ENCODE measurements at regions of chr19 and their contacts with region 1.

Region 1: DNA sequence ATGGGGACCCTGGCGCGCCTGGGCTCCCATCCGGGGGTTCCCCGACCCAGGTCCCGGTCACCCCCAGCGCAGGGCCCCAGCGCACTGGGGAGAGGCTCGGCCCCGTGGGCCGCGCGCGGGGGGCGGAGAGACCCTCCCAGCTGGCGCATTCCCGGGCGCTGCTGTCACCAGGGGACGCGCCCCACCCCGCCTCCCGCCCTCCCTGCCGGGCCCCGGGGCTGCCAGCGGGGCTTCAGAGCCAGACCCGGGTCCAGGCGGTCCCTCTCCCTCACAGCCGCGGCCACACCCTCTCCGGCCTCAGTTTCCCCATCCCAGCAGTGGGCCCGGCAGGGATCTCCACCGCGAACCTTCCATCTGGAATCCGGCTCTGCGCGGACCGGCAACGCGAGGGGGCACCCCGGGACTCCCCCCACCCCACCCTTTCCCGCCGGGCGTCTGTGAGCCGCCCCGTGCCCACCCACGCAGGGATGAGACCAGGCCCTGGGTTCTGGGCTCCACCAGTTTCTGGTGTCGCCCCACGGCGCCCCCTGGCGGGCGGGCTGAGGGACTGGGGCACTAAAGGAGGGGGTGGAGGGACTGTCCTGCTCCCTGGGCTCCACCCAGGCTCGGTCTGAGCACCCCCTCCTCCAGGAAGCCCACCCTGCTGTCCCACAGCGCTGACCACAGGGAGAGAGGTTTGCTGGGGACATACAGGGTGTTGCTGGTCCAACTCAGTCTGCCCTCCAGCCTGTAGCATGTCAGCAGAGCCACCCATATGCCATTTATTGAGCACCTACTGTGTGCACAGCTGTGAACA is 878 bp upstream of the ADAMTSL5 start:
- DNase-seq: peak; percentile 70 to 77
- H3K4me3 ChIP-seq: peak overlapping the region; percentile 91
- H3K4me3 Mint-ChIP-seq: peak overlapping the region; percentile 73
- H3K27ac Mint-ChIP-seq: no peak overlapping the region
- H3K4me1 ChIP-seq: peaks cover 24% of the 10 kb centered on the region
- H3K4me1 Mint-ChIP-seq: peaks cover 6% of the 10 kb centered on the region
- H3K27me3 ChIP-seq: no peaks in the 10 kb centered on the region
- H3K27me3 Mint-ChIP-seq: no peaks in the 10 kb centered on the region
- CTCF ChIP-seq: peak; percentile 69 to 83

Region 2: GRCh38 chr19:835210-835810 is 678.4 kb before region 1 on chr19:
- CTCF ChIA-PET with region 1: no interaction called
- POLR2A ChIA-PET with region 1: interaction called, 11 read pairs
- intact Hi-C with region 1: no loop called
- DNase-seq: no peak
- H3K4me3 ChIP-seq: no peak overlapping the region
- H3K4me3 Mint-ChIP-seq: no peak overlapping the region
- H3K27ac Mint-ChIP-seq: no peak overlapping the region
- H3K4me1 ChIP-seq: no peaks in the 10 kb centered on the region
- H3K4me1 Mint-ChIP-seq: no peaks in the 10 kb centered on the region
- H3K27me3 ChIP-seq: no peaks in the 10 kb centered on the region
- H3K27me3 Mint-ChIP-seq: no peaks in the 10 kb centered on the region
- CTCF ChIP-seq: no peak

Region 3: GRCh38 chr19:1490311-1491113 is 23.2 kb before region 1 on chr19 and contains the start of gene PCSK4:
- CTCF ChIA-PET with region 1: interaction called, 4 read pairs
- POLR2A ChIA-PET with region 1: interaction called, 4 read pairs
- intact Hi-C with region 1: loop called (anchors 2 kb)
- DNase-seq: peak; percentile 97 to 99
- H3K4me3 ChIP-seq: peak within 1 kb of the TSS; percentile 97
- H3K4me3 Mint-ChIP-seq: peak within 1 kb of the TSS; percentile 89
- H3K27ac Mint-ChIP-seq: peak within 1 kb of the TSS; percentile 88
- H3K4me1 ChIP-seq: peaks cover 37% of the 10 kb centered on the region
- H3K4me1 Mint-ChIP-seq: peaks cover 21% of the 10 kb centered on the region
- H3K27me3 ChIP-seq: no peaks in the 10 kb centered on the region
- H3K27me3 Mint-ChIP-seq: no peaks in the 10 kb centered on the region
- CTCF ChIP-seq: no peak
- total RNA-seq, gene PCSK4: 6.4 and 9.8 TPM in 2 replicates

Region 4: DNA sequence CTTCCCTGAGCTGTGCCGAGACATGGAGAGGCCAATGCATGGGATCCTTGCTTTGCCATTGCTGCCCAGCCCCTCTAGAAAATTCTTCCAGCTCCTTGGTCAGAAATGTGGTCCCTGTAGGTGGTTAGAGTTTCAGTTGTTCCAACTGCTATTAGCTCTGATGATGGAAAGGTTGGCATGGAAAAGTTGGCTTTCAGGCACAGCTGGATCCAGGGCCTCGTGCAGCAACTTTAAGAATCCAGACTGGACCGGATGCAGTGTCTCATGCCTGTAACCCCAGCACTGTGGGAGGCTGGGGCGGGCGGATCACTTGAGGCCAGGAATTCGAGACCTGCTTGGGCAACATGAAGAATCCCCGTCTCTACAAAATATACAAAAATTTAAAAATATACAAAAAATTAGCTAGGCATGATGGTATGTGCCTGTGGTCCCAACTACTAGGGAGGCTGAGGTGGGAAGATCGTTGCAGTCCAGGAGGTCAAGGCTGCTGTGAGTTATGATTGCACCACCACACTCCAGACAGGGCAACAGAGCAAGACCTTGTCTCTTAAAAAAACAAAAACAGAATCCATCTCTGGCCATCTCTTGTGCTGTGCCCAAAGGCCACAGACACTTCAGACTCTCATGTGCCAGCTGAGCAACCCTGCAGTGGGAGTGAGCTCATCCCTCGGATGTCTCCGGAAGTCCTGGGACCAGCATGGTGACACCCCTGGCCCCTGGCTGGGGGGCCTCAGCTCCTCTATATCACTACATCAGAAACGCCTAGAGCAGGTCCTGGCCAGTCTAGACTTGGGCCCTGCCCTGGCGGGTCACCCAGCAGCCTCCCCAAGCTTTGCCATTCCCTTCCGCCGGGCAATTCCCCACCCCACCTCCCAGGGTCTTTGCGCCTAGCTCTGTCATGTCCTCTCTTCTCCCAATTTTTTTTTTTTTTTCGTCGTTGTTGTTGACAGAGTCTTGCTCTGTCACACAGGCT is 37.7 kb after region 1 on chr19:
- CTCF ChIA-PET with region 1: no interaction called
- POLR2A ChIA-PET with region 1: no interaction called
- intact Hi-C with region 1: no loop called
- DNase-seq: no peak
- H3K4me3 ChIP-seq: no peak overlapping the region
- H3K4me3 Mint-ChIP-seq: no peak overlapping the region
- H3K27ac Mint-ChIP-seq: no peak overlapping the region
- H3K4me1 ChIP-seq: no peaks in the 10 kb centered on the region
- H3K4me1 Mint-ChIP-seq: no peaks in the 10 kb centered on the region
- H3K27me3 ChIP-seq: no peaks in the 10 kb centered on the region
- H3K27me3 Mint-ChIP-seq: no peaks in the 10 kb centered on the region
- CTCF ChIP-seq: no peak

Region 5: GRCh38 chr19:1566513-1567115 is 52.9 kb after region 1 on chr19:
- CTCF ChIA-PET with region 1: no interaction called
- POLR2A ChIA-PET with region 1: no interaction called
- intact Hi-C with region 1: no loop called
- DNase-seq: peak; percentile 52 to 56
- H3K4me3 ChIP-seq: peak overlapping the region; percentile 67
- H3K4me3 Mint-ChIP-seq: peak overlapping the region; percentile 55
- H3K27ac Mint-ChIP-seq: no peak overlapping the region
- H3K4me1 ChIP-seq: peaks cover 8% of the 10 kb centered on the region
- H3K4me1 Mint-ChIP-seq: peaks cover 12% of the 10 kb centered on the region
- H3K27me3 ChIP-seq: no peaks in the 10 kb centered on the region
- H3K27me3 Mint-ChIP-seq: peaks cover 5% of the 10 kb centered on the region
- CTCF ChIP-seq: no peak

Region 6: GRCh38 chr19:1601613-1602064 is 87.9 kb after region 1 on chr19:
- CTCF ChIA-PET with region 1: no interaction called
- POLR2A ChIA-PET with region 1: no interaction called
- intact Hi-C with region 1: no loop called
- DNase-seq: peak in 1 of 2 experiments; percentile 24
- H3K4me3 ChIP-seq: no peak overlapping the region
- H3K4me3 Mint-ChIP-seq: no peak overlapping the region
- H3K27ac Mint-ChIP-seq: no peak overlapping the region
- H3K4me1 ChIP-seq: peaks cover 12% of the 10 kb centered on the region; the same call in 1 of the 2 replicates
- H3K4me1 Mint-ChIP-seq: no peaks in the 10 kb centered on the region
- H3K27me3 ChIP-seq: no peaks in the 10 kb centered on the region
- H3K27me3 Mint-ChIP-seq: no peaks in the 10 kb centered on the region
- CTCF ChIP-seq: peak in 1 of 2 experiments; percentile 11